Esophagus muscularis mucosa (tissue), 4 donors: ENCODE measurements at regions of chr12 and their contacts with region 1.

Region 1: DNA sequence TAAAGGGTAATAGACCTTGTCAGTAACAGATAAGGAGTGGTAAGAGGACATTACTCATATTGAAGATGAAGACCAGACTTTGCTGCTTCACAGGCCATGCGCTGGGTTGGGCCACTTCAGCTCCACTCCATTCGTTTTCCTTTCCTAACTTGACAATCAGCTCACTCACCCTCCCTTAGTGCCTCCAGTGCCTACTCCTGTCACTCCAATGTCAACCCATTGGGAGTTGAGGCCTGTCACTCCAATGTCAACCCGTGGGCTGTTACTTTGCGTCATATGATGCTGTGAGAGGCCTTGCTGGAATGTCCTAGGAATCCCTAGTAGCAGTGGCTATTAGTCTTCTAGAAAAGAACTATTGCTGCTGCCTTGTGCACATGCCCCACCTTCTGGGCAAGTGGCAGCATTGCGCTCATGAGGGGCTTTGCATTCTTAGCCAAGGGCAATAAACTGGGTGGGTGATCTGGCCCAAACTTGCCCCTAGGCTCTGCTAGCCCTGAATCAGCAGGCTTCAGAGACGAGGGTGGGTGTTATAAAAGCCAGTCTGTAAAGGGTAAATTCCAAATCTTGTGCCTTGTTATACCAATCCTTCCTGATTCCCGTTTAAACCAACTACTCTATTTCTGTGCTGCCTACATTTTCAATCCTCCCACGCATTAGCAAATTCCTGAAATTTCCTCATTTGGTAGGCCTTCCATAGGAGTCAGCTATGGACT is 36.1 kb downstream of the BAZ2A start:
- DNase-seq: no peak
- H3K4me3 ChIP-seq: no peak overlapping the region
- H3K27ac ChIP-seq: peak overlapping the region; percentile 64 to 78 (median 71)
- H3K4me1 ChIP-seq: peaks cover 16 to 37% (median 33%) of the 10 kb centered on the region in 4 donors
- H3K27me3 ChIP-seq: peaks cover 0 to 2% (median 0%) of the 10 kb centered on the region in 4 donors
- CTCF ChIP-seq: peak; percentile 75 to 86 (median 79)
- EP300 ChIP-seq: no peak
- POLR2A ChIP-seq: no peak

Region 2: GRCh38 chr12:56510786-56511185 is 83.3 kb before region 1 on chr12:
- intact Hi-C with region 1: loop called (anchors 5 kb)
- DNase-seq: no peak
- H3K4me3 ChIP-seq: no peak overlapping the region
- H3K27ac ChIP-seq: no peak overlapping the region
- H3K4me1 ChIP-seq: peaks cover 5 to 8% (median 6%) of the 10 kb centered on the region in 4 donors
- H3K27me3 ChIP-seq: no peaks in the 10 kb centered on the region
- CTCF ChIP-seq: no peak
- EP300 ChIP-seq: no peak
- POLR2A ChIP-seq: no peak